ENCODE measurements at regions of chr19 and their contacts with region 1.

Region 1: GRCh38 chr19:36772311-36773222 is at the start of gene ZNF850:
- DNase-seq: peak; percentile 89 to 97 (median 94)
- H3K4me3 ChIP-seq: peak within 1 kb of the TSS; percentile 55 to 100 (median 88)
- H3K27ac ChIP-seq: peak within 1 kb of the TSS in 57 of 59 donors; percentile 7 to 97 (median 88)
- H3K27me3 ChIP-seq: no peaks in the 10 kb centered on the region
- CTCF ChIP-seq: peak in 14 of 56 donors; percentile 3 to 44 (median 20)
- total RNA-seq, gene ZNF850: 0.84 to 5.1 (median 1.8) TPM

Region 2: GRCh38 chr19:36665832-36666231 is 106.7 kb before region 1 on chr19:
- intact Hi-C with region 1: loop called in 1 of 2 experiments (anchors 5 kb)
- DNase-seq: no peak
- H3K4me3 ChIP-seq: peak overlapping the region; percentile 61 to 100 (median 85)
- H3K27ac ChIP-seq: peak overlapping the region in 2 of 59 donors; percentile 84 to 89
- H3K27me3 ChIP-seq: no peaks in the 10 kb centered on the region
- CTCF ChIP-seq: no peak

Region 3: DNA sequence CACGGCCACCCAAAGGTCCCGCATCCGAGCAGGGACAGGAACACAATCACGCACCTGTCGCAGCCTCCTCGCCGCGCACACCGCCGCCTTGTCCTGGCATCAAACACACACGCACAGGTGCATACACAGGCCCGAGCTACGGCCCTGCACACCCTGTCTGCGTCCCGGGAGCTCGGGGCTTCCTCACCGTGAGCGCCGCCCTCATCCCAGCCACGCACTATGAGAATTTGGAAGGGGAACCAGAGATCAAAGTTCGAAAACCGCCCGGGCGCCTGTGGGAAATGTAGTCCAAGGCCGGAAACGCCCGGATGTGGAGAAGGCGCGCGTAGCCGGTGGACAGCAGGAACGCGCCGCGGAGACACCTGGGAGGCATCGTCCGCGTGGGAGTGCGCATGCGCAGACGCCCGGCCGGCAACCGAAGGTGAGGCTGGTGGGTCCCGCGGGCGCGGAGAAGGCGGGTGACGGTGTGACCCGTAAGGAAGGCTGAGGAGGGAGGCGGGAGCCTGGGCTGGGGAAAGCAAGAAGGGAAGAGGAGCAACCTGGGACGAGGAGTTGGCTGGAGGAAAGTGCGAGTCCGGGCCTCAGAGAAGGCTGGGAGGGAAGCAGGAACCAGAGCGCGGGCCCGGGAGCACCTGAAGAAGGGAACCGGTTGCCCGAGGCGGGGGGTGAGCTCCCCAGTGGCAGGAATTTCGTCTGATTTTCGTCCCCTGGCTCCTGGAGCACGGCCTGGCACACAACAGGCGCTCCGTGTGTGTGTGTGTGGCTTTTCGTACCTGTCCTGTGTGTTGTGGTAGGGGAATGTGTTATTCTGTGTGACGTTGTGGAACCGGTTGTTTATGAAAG is 85.1 kb before region 1 on chr19 and contains the start of gene ZNF567:
- intact Hi-C with region 1: loop called (anchors 2 to 5 kb)
- DNase-seq: peak; percentile 96 to 99 (median 98)
- H3K4me3 ChIP-seq: peak within 1 kb of the TSS; percentile 63 to 100 (median 93)
- H3K27ac ChIP-seq: peak within 1 kb of the TSS in 52 of 59 donors; percentile 2 to 87 (median 62)
- H3K27me3 ChIP-seq: no peaks in the 10 kb centered on the region
- CTCF ChIP-seq: peak in 24 of 56 donors; percentile 12 to 54 (median 28)
- total RNA-seq, gene ZNF567: 5.6 to 15.0 (median 8.9) TPM

Region 4: DNA sequence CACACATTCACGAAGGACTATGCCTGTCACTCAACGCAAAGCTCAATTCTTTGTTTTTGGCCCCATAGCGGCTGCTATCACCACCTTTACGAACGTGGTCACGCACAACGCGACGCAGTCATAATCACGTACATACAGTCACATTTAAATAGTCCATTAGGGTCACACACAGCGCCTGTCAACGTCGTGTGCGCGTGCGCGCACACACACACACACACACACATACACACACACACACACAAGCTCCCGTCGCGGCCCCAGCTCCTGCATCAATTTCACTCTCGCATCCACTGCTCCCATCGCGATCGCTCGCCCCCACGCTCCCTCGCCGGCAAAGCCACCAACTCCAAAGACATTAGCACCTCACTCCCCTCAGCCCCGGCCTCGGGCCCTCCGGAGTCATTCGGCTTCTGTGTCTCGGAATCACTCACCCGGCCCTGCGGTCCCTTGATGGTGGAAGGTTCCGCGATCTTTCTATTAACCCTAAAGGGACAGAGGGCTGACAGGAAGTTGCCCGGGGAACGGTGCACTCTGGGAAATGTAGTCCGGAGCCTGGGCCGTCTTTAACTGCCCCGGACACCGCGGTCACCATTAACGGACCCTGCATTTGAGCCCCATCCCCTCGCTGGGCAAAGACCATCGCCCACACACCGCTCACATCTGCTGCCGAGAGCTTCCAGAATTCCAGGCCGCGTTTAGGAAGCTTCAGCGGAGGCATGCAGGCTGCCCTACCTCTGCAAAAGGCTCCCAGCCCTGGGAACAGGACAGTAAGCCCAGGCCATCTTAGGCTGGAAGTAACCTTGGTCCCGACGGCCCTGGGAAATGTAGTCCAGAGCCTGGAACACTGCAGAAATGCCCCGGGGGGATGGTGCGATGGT is 65.6 kb after region 1 on chr19 and contains the start of gene ZNF790:
- intact Hi-C with region 1: loop called in 1 of 2 experiments (anchors 5 kb)
- DNase-seq: peak; percentile 87 to 95 (median 93)
- H3K4me3 ChIP-seq: peak within 1 kb of the TSS; percentile 65 to 99 (median 82)
- H3K27ac ChIP-seq: peak within 1 kb of the TSS; percentile 79 to 99 (median 94)
- H3K27me3 ChIP-seq: no peaks in the 10 kb centered on the region
- CTCF ChIP-seq: peak in 7 of 56 donors; percentile 13 to 28 (median 17)
- total RNA-seq, gene ZNF790: 8.6 to 21.8 (median 12.8) TPM

Region 5: GRCh38 chr19:36850559-36851442 is 78.2 kb after region 1 on chr19 and contains the start of gene ZNF345:
- intact Hi-C with region 1: loop called in 1 of 2 experiments (anchors 2 kb)
- DNase-seq: peak; percentile 80 to 95 (median 94)
- H3K4me3 ChIP-seq: peak within 1 kb of the TSS; percentile 63 to 99 (median 89)
- H3K27ac ChIP-seq: peak within 1 kb of the TSS; percentile 79 to 98 (median 94)
- H3K27me3 ChIP-seq: no peaks in the 10 kb centered on the region
- CTCF ChIP-seq: peak in 7 of 56 donors; percentile 5 to 17 (median 10)
- total RNA-seq, gene ZNF345: 4.2 to 23.2 (median 10.2) TPM

Region 6: GRCh38 chr19:36915992-36916830 is 143.6 kb after region 1 on chr19 and contains the starts of genes ZNF568 and ZNF829:
- intact Hi-C with region 1: loop called in 1 of 2 experiments (anchors 10 kb)
- DNase-seq: peak; percentile 83 to 94 (median 92)
- H3K4me3 ChIP-seq: peak within 1 kb of the TSS; percentile 59 to 98 (median 83)
- H3K27ac ChIP-seq: peak within 1 kb of the TSS; percentile 89 to 100 (median 97)
- H3K27me3 ChIP-seq: no peaks in the 10 kb centered on the region
- CTCF ChIP-seq: peak in 55 of 56 donors; percentile 23 to 77 (median 58)
- total RNA-seq, gene ZNF568: 17.6 to 31.2 (median 23.0) TPM
- total RNA-seq, gene ZNF829: 3.1 to 8.6 (median 4.9) TPM

Measured in dorsolateral prefrontal cortex (tissue), 120 donors.